Panc1 (cell line): ENCODE measurements at regions of chr12 and their contacts with region 1.

Region 1: DNA sequence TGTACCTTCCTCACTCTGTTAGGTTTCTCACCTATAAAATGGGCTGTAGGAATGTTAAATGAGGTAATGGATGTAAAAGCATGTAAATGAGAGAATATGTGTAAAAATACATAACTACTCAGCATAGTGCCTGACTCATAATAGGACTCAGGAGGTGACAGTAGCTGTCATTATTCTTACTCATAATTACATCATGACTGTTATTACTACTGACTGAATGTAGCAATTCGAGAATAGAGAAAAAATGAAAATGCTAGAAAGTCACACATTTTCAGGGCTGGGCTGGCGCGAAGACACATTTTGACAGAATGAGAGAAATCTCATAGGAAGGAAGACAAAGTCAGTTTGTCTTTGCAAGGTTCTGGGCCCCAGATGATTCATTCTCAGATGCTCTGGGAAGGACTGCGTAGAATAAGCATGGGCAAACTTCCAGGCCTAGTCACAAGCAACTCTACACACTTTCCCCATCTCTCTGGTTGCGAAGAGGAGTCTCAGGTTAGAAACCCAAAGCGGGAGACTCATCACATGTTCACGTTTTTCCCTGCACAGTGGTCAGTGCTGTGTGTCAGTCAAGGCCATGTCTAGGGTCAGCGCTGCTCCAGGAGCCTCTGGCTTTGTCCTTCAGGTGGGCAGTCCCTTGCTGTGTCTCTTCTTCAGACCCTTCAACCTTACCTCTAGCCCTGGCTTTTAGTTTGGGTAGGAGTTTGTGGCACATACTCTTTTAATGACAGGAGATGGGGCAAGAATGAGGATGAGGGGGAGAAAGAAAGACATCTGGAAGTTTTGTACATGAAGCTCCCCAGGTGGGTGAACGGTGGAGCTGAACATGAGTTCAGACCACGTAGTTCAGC is 8.4 kb downstream of the GPRC5A start:
- DNase-seq: no peak
- ATAC-seq: peak; percentile 44
- H3K4me3 ChIP-seq: peak overlapping the region; percentile 61 to 86; a peak in 3 of 4 replicates
- H3K27ac ChIP-seq: peak overlapping the region; percentile 96
- H3K4me1 ChIP-seq: peaks cover 77% of the 10 kb centered on the region
- H3K27me3 ChIP-seq: no peaks in the 10 kb centered on the region
- CTCF ChIP-seq: no peak

Region 2: DNA sequence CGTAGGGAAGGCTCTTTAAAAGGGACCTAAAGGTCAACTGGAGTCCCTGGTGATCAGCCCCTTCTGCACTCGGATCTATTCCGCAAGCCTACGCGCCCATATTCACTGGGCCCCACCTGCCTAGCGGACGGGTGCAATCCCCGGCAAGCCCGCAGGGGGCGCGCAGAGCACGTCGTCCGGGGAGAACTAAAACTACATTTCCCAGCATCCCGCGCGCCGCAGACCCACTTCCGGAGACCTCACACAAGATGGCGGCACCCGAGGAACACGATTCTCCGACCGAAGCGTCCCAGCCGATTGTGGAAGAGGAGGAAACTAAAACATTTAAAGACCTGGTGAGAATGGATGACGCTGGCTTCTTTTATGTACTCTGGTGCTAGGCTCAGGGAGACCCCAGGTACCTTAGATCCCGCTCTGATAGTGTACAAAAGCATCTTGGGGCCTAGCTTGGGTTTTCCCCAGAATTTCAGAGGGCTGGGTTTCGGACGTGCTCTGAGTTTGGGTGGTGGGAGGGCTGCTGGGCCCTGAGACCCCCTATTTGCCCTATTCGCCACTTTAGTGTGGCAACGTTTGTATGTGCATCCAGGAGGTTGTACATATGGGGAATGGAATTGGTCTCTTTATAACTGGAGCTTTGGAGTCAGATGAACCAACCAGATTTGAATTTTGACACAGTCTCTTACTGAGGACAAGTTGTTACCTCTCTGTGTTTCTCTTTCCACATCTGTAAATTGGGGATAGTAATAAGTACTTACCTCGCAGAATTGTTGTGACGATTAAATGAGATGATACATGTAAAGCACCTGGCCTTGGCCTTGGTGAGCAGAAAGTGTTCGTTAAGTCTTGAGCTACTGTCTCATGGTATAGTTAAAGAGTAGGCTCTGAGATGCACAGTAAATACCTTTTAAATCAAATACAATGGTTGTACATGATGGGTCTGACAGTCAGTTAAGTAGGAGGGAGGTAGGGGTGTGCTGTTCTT is 86.3 kb before region 1 on chr12 and contains the start of gene DDX47:
- CTCF ChIA-PET with region 1: interaction called, 3 read pairs
- POLR2A ChIA-PET with region 1: interaction called, 10 read pairs
- in situ Hi-C with region 1: no loop called
- intact Hi-C with region 1: loop called (anchors 5 kb)
- DNase-seq: no peak
- ATAC-seq: peak; percentile 87
- H3K4me3 ChIP-seq: peak within 1 kb of the TSS; percentile 68 to 99
- H3K27ac ChIP-seq: peak within 1 kb of the TSS; percentile 99
- H3K4me1 ChIP-seq: peaks cover 38% of the 10 kb centered on the region
- H3K27me3 ChIP-seq: no peaks in the 10 kb centered on the region
- CTCF ChIP-seq: peak; percentile 92
- total RNA-seq, gene DDX47: 115 TPM

Region 3: GRCh38 chr12:12819671-12820311 is 80.0 kb before region 1 on chr12:
- CTCF ChIA-PET with region 1: no interaction called
- POLR2A ChIA-PET with region 1: interaction called, 10 read pairs
- in situ Hi-C with region 1: no loop called
- intact Hi-C with region 1: loop called (anchors 5 kb)
- DNase-seq: no peak
- ATAC-seq: peak; percentile 95
- H3K4me3 ChIP-seq: no peak overlapping the region; a peak in 1 of 4 replicates
- H3K27ac ChIP-seq: peak overlapping the region; percentile 99
- H3K4me1 ChIP-seq: peaks cover 84% of the 10 kb centered on the region
- H3K27me3 ChIP-seq: no peaks in the 10 kb centered on the region
- CTCF ChIP-seq: no peak

Region 4: GRCh38 chr12:12837025-12837872 is 62.5 kb before region 1 on chr12:
- CTCF ChIA-PET with region 1: interaction called, 12 read pairs
- POLR2A ChIA-PET with region 1: interaction called, 11 read pairs
- in situ Hi-C with region 1: no loop called
- intact Hi-C with region 1: no loop called
- DNase-seq: peak; percentile 71
- ATAC-seq: peak; percentile 53
- H3K4me3 ChIP-seq: no peak overlapping the region
- H3K27ac ChIP-seq: peak overlapping the region; percentile 93
- H3K4me1 ChIP-seq: peaks cover 62% of the 10 kb centered on the region
- H3K27me3 ChIP-seq: no peaks in the 10 kb centered on the region
- CTCF ChIP-seq: peak; percentile 70; the same call in 1 of the 2 replicates

Region 5: DNA sequence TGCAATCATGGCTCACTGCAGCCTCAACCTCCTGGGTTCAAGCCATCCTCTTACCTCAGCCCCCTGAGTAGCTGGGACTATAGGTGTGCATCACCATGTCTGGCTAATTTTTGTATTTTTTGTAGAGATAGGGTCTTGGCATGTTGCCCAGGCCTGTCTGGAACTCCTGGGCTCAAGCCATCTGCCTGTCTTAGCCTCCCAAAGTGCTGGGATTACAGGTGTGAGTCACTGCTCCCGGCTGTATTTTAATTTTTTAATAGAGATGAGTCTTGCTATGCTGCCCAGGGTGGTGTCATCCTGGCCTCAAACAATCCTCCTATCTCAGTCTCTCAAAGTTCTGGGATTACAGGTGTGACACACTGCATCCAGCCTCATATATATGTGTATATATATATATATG is 40.1 kb before region 1 on chr12:
- CTCF ChIA-PET with region 1: no interaction called
- POLR2A ChIA-PET with region 1: interaction called, 10 read pairs
- in situ Hi-C with region 1: no loop called
- intact Hi-C with region 1: no loop called
- DNase-seq: no peak
- ATAC-seq: no peak
- H3K4me3 ChIP-seq: no peak overlapping the region
- H3K27ac ChIP-seq: no peak overlapping the region
- H3K4me1 ChIP-seq: no peaks in the 10 kb centered on the region
- H3K27me3 ChIP-seq: no peaks in the 10 kb centered on the region
- CTCF ChIP-seq: no peak

Region 6: GRCh38 chr12:13154027-13154538 is 254.3 kb after region 1 on chr12:
- CTCF ChIA-PET with region 1: no interaction called
- POLR2A ChIA-PET with region 1: no interaction called
- in situ Hi-C with region 1: no loop called
- intact Hi-C with region 1: no loop called
- DNase-seq: no peak
- ATAC-seq: no peak
- H3K4me3 ChIP-seq: no peak overlapping the region
- H3K27ac ChIP-seq: no peak overlapping the region
- H3K4me1 ChIP-seq: no peaks in the 10 kb centered on the region
- H3K27me3 ChIP-seq: no peaks in the 10 kb centered on the region
- CTCF ChIP-seq: no peak

Region 7: GRCh38 chr12:13304924-13305323 is 405.2 kb after region 1 on chr12:
- CTCF ChIA-PET with region 1: no interaction called
- POLR2A ChIA-PET with region 1: interaction called, 13 read pairs
- in situ Hi-C with region 1: no loop called
- intact Hi-C with region 1: no loop called
- DNase-seq: no peak
- ATAC-seq: no peak
- H3K4me3 ChIP-seq: no peak overlapping the region
- H3K27ac ChIP-seq: no peak overlapping the region
- H3K4me1 ChIP-seq: no peaks in the 10 kb centered on the region
- H3K27me3 ChIP-seq: no peaks in the 10 kb centered on the region
- CTCF ChIP-seq: no peak